ENCODE measurements at regions of chr15 and their contacts with region 1.

Region 1: GRCh38 chr15:72312605-72313447 is 7.1 kb downstream of the CELF6 start:
- DNase-seq: peak; percentile 46
- H3K4me3 Mint-ChIP-seq: no peak overlapping the region
- H3K27ac Mint-ChIP-seq: no peak overlapping the region
- H3K4me1 Mint-ChIP-seq: peaks cover 4% of the 10 kb centered on the region
- H3K27me3 Mint-ChIP-seq: peaks cover 2% of the 10 kb centered on the region

Region 2: GRCh38 chr15:72222259-72222832 is 90.5 kb before region 1 on chr15:
- intact Hi-C with region 1: no loop called
- DNase-seq: no peak
- H3K4me3 Mint-ChIP-seq: peak overlapping the region; percentile 11
- H3K27ac Mint-ChIP-seq: peak overlapping the region; percentile 26
- H3K4me1 Mint-ChIP-seq: peaks cover 68% of the 10 kb centered on the region
- H3K27me3 Mint-ChIP-seq: no peaks in the 10 kb centered on the region

Region 3: GRCh38 chr15:72339777-72340177 is 27.0 kb after region 1 on chr15:
- intact Hi-C with region 1: no loop called
- DNase-seq: no peak
- H3K4me3 Mint-ChIP-seq: no peak overlapping the region
- H3K27ac Mint-ChIP-seq: no peak overlapping the region
- H3K4me1 Mint-ChIP-seq: no peaks in the 10 kb centered on the region
- H3K27me3 Mint-ChIP-seq: no peaks in the 10 kb centered on the region

Region 4: GRCh38 chr15:72599855-72600464 is 287.1 kb after region 1 on chr15:
- intact Hi-C with region 1: loop called (anchors 10 kb)
- DNase-seq: no peak
- H3K4me3 Mint-ChIP-seq: no peak overlapping the region
- H3K27ac Mint-ChIP-seq: no peak overlapping the region
- H3K4me1 Mint-ChIP-seq: no peaks in the 10 kb centered on the region
- H3K27me3 Mint-ChIP-seq: peaks cover 11% of the 10 kb centered on the region

Region 5: GRCh38 chr15:72671535-72671934 is 358.7 kb after region 1 on chr15:
- intact Hi-C with region 1: loop called (anchors 10 kb)
- DNase-seq: no peak
- H3K4me3 Mint-ChIP-seq: no peak overlapping the region
- H3K27ac Mint-ChIP-seq: no peak overlapping the region
- H3K4me1 Mint-ChIP-seq: peaks cover 10% of the 10 kb centered on the region
- H3K27me3 Mint-ChIP-seq: peaks cover 13% of the 10 kb centered on the region

Measured in activated T-helper 2 cell treated with anti-CD3 and anti-CD28 coated beads, Interferon-gamma antibody, Interleukin-2, Interleukin-4, amounts not matched to agents 10 μg/mL and 5 μg/mL and 100 μg/mL, durations not matched to agents 14 hours and 24 hours and 36 hours (primary cell).